ENCODE measurements at regions of chr19 and their contacts with region 1.

Region 1: GRCh38 chr19:39671738-39672363 is 16.1 kb downstream of the LGALS16 start:
- DNase-seq: peak; percentile 75
- ATAC-seq: peak; percentile 51
- H3K4me3 ChIP-seq: no peak overlapping the region
- H3K4me3 Mint-ChIP-seq: no peak overlapping the region
- H3K27ac ChIP-seq: no peak overlapping the region
- H3K27ac Mint-ChIP-seq: no peak overlapping the region
- H3K4me1 ChIP-seq: peaks cover 0 to 3% of the 10 kb centered on the region in 2 donors
- H3K4me1 Mint-ChIP-seq: peaks cover 4% of the 10 kb centered on the region
- H3K27me3 ChIP-seq: peaks cover 0 to 12% (median 4%) of the 10 kb centered on the region in 4 experiments
- H3K27me3 Mint-ChIP-seq: peaks cover 33% of the 10 kb centered on the region
- CTCF ChIP-seq: peak; percentile 72

Region 2: DNA sequence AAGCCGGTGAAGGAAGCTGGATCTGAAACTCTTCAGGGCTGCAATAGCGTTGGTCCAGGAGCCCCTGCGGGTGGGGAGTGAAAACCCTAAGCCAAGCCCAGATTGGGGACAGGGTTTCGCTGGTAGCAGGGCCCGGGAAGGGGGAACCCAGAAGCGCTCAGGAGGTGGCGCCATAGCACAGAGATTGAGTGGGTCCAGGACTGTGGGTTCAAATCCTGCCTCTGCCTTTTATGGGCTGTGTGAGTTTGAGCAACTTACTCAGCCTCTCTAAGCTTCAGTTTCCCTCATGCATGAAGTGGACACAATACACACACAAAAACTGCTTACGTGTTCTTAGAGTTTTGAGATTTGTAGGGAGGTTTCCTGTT is 459.5 kb before region 1 on chr19:
- CTCF ChIA-PET with region 1: no interaction called
- POLR2A ChIA-PET with region 1: no interaction called
- intact Hi-C with region 1: loop called (anchors 5 kb)
- DNase-seq: peak; percentile 47
- ATAC-seq: no peak
- H3K4me3 ChIP-seq: no peak overlapping the region
- H3K4me3 Mint-ChIP-seq: no peak overlapping the region
- H3K27ac ChIP-seq: no peak overlapping the region
- H3K27ac Mint-ChIP-seq: no peak overlapping the region
- H3K4me1 ChIP-seq: no peaks in the 10 kb centered on the region
- H3K4me1 Mint-ChIP-seq: no peaks in the 10 kb centered on the region
- H3K27me3 ChIP-seq: peaks cover 0 to 5% (median 1%) of the 10 kb centered on the region in 4 experiments
- H3K27me3 Mint-ChIP-seq: peaks cover 15% of the 10 kb centered on the region
- CTCF ChIP-seq: peak; percentile 20

Region 3: GRCh38 chr19:39554701-39555311 is 117.0 kb before region 1 on chr19:
- CTCF ChIA-PET with region 1: interaction called, 91 read pairs
- POLR2A ChIA-PET with region 1: no interaction called
- intact Hi-C with region 1: no loop called
- DNase-seq: no peak
- ATAC-seq: no peak
- H3K4me3 ChIP-seq: no peak overlapping the region
- H3K4me3 Mint-ChIP-seq: no peak overlapping the region
- H3K27ac ChIP-seq: no peak overlapping the region
- H3K27ac Mint-ChIP-seq: no peak overlapping the region
- H3K4me1 ChIP-seq: peaks cover 16 to 33% of the 10 kb centered on the region in 2 donors
- H3K4me1 Mint-ChIP-seq: peaks cover 38% of the 10 kb centered on the region
- H3K27me3 ChIP-seq: no peaks in the 10 kb centered on the region
- H3K27me3 Mint-ChIP-seq: no peaks in the 10 kb centered on the region
- CTCF ChIP-seq: no peak